ENCODE measurements at regions of chr7 and their contacts with region 1.

Region 1: DNA sequence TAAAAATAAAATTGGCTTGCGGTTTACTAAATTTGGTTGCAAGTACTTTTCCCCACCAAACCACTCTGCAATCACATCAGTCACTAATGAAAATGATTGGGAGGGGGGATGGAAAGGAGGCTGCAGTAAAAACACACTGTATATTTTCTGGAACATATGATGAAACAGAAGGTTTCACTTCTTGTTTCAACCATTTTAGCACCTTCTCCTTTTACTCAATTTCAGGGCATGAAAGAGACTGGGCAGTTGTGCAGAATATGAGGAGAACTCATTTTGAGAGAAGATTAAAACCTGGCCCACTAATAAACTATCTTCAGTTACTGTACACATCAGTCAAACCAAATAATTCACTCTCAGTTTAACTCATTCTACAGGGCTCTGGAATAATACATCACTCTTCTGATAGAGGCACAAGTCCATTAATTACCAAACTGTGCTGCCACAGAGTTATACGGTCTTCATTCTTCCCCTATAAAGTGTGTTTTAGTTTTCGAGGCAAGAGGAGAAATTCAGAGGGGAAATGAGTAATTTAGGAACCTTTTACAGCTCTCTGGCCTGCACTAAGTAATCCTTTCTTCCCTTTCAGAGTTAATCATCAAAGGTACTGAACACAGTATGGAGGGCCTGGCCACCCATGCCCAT is 25.5 kb downstream of the JAZF1 start:
- DNase-seq: no peak
- H3K4me3 Mint-ChIP-seq: peak overlapping the region; percentile 34
- H3K27ac Mint-ChIP-seq: peak overlapping the region; percentile 83
- H3K4me1 Mint-ChIP-seq: peaks cover 37% of the 10 kb centered on the region
- H3K27me3 Mint-ChIP-seq: peaks cover 11% of the 10 kb centered on the region

Region 2: GRCh38 chr7:28037220-28038010 is 117.7 kb before region 1 on chr7:
- intact Hi-C with region 1: loop called (anchors 1 kb)
- DNase-seq: no peak
- H3K4me3 Mint-ChIP-seq: no peak overlapping the region
- H3K27ac Mint-ChIP-seq: peak overlapping the region; percentile 54
- H3K4me1 Mint-ChIP-seq: peaks cover 25% of the 10 kb centered on the region
- H3K27me3 Mint-ChIP-seq: peaks cover 30% of the 10 kb centered on the region

Region 3: GRCh38 chr7:28179120-28180030 is 24.2 kb after region 1 on chr7:
- intact Hi-C with region 1: loop called (anchors 1 kb)
- DNase-seq: peak; percentile 91
- H3K4me3 Mint-ChIP-seq: peak overlapping the region; percentile 50
- H3K27ac Mint-ChIP-seq: no peak overlapping the region
- H3K4me1 Mint-ChIP-seq: peaks cover 20% of the 10 kb centered on the region
- H3K27me3 Mint-ChIP-seq: peaks cover 46% of the 10 kb centered on the region

Region 4: DNA sequence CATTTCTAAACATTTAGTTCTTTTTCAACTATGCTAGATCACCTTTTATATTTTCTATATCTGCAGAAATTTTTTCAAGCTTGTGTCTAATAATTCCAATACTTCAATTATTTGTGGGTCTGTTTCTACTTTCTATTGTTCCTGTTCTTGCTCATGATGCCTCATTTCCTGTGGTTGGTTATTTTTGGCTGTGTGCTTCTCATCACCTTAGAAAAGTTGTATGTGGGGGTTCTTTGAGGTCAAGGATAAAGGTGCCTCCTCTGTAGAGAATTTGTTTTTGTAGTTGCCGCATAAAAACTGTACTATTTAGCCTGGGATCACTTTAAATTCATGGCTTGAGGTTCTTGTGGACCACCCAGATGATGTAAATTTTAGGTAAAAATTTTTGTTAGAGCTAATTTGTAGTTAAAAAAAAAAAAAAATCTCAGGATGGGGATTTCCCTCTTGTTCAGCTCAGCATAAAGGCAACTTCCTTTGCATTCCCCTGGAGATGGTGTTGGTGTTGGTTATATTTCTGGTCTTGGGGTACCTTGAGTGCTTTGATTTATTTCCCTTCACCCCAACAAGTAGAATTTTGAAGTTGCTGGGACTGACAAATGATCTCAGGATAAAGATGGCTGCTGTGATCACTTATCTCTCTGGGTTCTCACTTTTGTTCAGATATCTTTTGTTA is 52.5 kb after region 1 on chr7:
- intact Hi-C with region 1: loop called (anchors 1 kb)
- DNase-seq: peak; percentile 53
- H3K4me3 Mint-ChIP-seq: no peak overlapping the region
- H3K27ac Mint-ChIP-seq: no peak overlapping the region
- H3K4me1 Mint-ChIP-seq: peaks cover 15% of the 10 kb centered on the region
- H3K27me3 Mint-ChIP-seq: peaks cover 7% of the 10 kb centered on the region

Region 5: GRCh38 chr7:28239823-28240204 is 84.7 kb after region 1 on chr7:
- intact Hi-C with region 1: loop called (anchors 1 kb)
- DNase-seq: no peak
- H3K4me3 Mint-ChIP-seq: peak overlapping the region; percentile 24
- H3K27ac Mint-ChIP-seq: no peak overlapping the region
- H3K4me1 Mint-ChIP-seq: peaks cover 6% of the 10 kb centered on the region
- H3K27me3 Mint-ChIP-seq: peaks cover 46% of the 10 kb centered on the region

Region 6: GRCh38 chr7:28292834-28293526 is 137.8 kb after region 1 on chr7:
- intact Hi-C with region 1: loop called (anchors 2 kb)
- DNase-seq: no peak
- H3K4me3 Mint-ChIP-seq: no peak overlapping the region
- H3K27ac Mint-ChIP-seq: no peak overlapping the region
- H3K4me1 Mint-ChIP-seq: peaks cover 8% of the 10 kb centered on the region
- H3K27me3 Mint-ChIP-seq: peaks cover 34% of the 10 kb centered on the region

Region 7: GRCh38 chr7:28315565-28316420 is 160.7 kb after region 1 on chr7:
- intact Hi-C with region 1: no loop called
- DNase-seq: no peak
- H3K4me3 Mint-ChIP-seq: no peak overlapping the region
- H3K27ac Mint-ChIP-seq: no peak overlapping the region
- H3K4me1 Mint-ChIP-seq: peaks cover 3% of the 10 kb centered on the region
- H3K27me3 Mint-ChIP-seq: peaks cover 44% of the 10 kb centered on the region

Region 8: DNA sequence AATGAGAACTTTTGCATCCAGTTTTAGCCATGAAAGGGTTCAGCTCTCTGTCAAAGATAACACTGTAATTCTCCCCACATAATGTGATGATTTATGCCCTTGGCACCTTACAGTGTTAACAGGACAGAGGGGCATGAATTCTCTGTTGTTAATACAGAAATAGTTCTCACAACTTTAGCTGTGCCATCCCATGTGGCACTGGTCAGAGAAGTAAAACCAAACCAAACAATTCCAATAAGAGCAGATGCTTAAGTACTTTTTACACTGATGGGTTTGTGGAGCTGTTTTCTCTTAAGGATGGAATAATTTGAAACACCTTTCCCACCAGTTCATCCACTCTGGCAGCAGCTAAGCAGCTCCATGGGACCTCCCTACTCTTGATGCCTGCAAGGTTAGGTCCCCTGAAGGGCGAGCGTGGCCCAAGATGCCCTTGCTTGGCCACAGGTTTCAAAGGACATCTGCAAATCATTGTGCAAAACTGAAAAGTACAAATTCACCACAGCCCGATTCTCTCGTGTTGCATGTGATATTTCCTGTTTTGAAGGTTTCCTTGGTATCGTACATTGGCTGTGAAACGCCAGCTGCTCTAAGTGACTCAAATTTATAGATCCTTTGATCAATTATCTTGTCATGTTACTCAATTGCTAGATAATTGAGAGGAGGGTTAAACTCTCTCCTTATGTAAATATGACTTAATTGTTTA is 174.7 kb after region 1 on chr7:
- intact Hi-C with region 1: no loop called
- DNase-seq: peak; percentile 76
- H3K4me3 Mint-ChIP-seq: peak overlapping the region; percentile 50
- H3K27ac Mint-ChIP-seq: no peak overlapping the region
- H3K4me1 Mint-ChIP-seq: peaks cover 19% of the 10 kb centered on the region
- H3K27me3 Mint-ChIP-seq: peaks cover 8% of the 10 kb centered on the region

Region 9: GRCh38 chr7:28408960-28409715 is 254.0 kb after region 1 on chr7:
- intact Hi-C with region 1: loop called (anchors 5 kb)
- DNase-seq: peak; percentile 82
- H3K4me3 Mint-ChIP-seq: peak overlapping the region; percentile 85
- H3K27ac Mint-ChIP-seq: peak overlapping the region; percentile 81
- H3K4me1 Mint-ChIP-seq: peaks cover 25% of the 10 kb centered on the region
- H3K27me3 Mint-ChIP-seq: peaks cover 63% of the 10 kb centered on the region